ENCODE measurements at regions of chr9 and their contacts with region 1.

Region 1: GRCh38 chr9:2122299-2122698 is 107.2 kb downstream of the SMARCA2 start:
- DNase-seq: no peak
- H3K4me3 ChIP-seq: no peak overlapping the region
- H3K27ac ChIP-seq: no peak overlapping the region
- H3K4me1 ChIP-seq: no peaks in the 10 kb centered on the region
- H3K27me3 ChIP-seq: no peaks in the 10 kb centered on the region
- CTCF ChIP-seq: no peak

Region 2: GRCh38 chr9:3018076-3018475 is 895.8 kb after region 1 on chr9:
- CTCF ChIA-PET with region 1: interaction called, 20 read pairs
- POLR2A ChIA-PET with region 1: no interaction called
- intact Hi-C with region 1: no loop called
- DNase-seq: no peak
- H3K4me3 ChIP-seq: no peak overlapping the region
- H3K27ac ChIP-seq: no peak overlapping the region
- H3K4me1 ChIP-seq: no peaks in the 10 kb centered on the region
- H3K27me3 ChIP-seq: peaks cover 5% of the 10 kb centered on the region; the same call in 1 of the 2 replicates
- CTCF ChIP-seq: no peak